ENCODE measurements at regions of chr10 and their contacts with region 1.

Region 1: DNA sequence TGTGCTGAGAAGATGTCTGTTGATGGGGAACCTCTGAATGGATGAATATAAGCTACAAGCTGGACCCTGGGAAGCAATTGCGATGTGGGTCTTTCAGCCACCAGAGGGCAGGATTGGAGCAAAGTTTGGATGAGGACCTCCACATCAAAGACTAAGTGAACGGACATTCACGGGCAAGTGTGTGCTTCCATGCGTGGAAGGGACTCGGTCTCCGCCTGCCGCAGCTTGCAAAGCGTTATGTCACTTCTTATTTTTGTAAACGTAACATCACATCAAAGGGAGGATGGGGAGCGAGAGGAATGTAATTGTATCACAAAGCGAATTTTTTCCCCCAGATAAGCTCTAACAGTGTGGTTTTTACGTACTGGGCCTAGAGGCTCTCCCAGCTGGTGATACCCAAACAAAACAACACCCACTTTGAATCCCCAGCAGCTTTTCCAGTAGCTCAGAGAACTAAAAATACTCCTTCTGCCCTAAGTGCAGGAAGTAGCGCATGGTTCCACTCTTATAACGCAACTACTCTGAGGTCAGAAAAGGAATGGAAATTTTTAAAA is 65.0 kb downstream of the VWA2 start:
- DNase-seq: peak; percentile 85
- ATAC-seq: peak; percentile 82
- H3K4me3 ChIP-seq: peak overlapping the region; percentile 24 to 41
- H3K27ac ChIP-seq: peak overlapping the region; percentile 13; the same call in 1 of the 2 replicates
- H3K4me1 ChIP-seq: peaks cover 6 to 19% of the 10 kb centered on the region in 2 experiments
- H3K27me3 ChIP-seq: peaks cover 26% of the 10 kb centered on the region; the same call in 1 of the 2 replicates
- CTCF ChIP-seq: peak; percentile 91 to 97 (median 97)
- POLR2A ChIP-seq: no peak
- RAD21 ChIP-seq: peak; percentile 100

Region 2: DNA sequence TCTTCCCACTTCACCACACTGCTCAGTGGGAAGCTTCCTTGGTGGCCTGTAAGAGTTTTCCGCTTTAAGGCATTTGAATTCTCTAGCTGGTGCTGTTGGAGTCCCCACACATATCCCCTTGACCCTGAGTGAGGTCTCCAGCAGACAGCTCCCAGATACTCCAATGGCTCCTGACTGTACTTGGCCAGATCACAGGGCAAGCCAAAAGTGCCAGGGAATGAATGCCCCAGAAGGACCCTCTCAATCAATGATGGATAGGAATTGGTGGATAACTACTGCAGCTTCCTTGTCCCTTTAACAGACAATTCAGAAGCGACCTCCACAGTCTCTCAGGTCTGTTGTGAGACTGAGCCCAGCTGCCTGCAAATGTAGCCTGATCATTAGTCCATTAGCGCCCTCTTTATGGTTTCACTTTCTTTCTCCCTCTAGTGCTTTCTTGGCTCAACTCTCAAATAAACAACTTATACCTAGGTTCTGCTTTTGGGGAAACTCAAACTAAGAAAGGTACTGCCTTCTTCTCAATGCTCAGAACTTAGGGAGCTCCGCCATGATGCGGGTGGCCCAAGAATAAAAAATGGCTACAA is 1071.1 kb before region 1 on chr10:
- CTCF ChIA-PET with region 1: no interaction called
- POLR2A ChIA-PET with region 1: no interaction called
- RAD21 ChIA-PET with region 1: no interaction called
- intact Hi-C with region 1: no loop called
- DNase-seq: no peak
- ATAC-seq: no peak
- H3K4me3 ChIP-seq: no peak overlapping the region
- H3K27ac ChIP-seq: no peak overlapping the region
- H3K4me1 ChIP-seq: no peaks in the 10 kb centered on the region
- H3K27me3 ChIP-seq: no peaks in the 10 kb centered on the region
- CTCF ChIP-seq: no peak
- POLR2A ChIP-seq: no peak
- RAD21 ChIP-seq: peak; percentile 37

Region 3: GRCh38 chr10:114208351-114208750 is 95.7 kb before region 1 on chr10:
- CTCF ChIA-PET with region 1: no interaction called
- POLR2A ChIA-PET with region 1: no interaction called
- RAD21 ChIA-PET with region 1: no interaction called
- intact Hi-C with region 1: no loop called
- DNase-seq: no peak
- ATAC-seq: peak; percentile 34; the same call in 1 of the 2 replicates
- H3K4me3 ChIP-seq: no peak overlapping the region
- H3K27ac ChIP-seq: no peak overlapping the region
- H3K4me1 ChIP-seq: no peaks in the 10 kb centered on the region
- H3K27me3 ChIP-seq: peaks cover 21% of the 10 kb centered on the region
- CTCF ChIP-seq: no peak
- POLR2A ChIP-seq: no peak
- RAD21 ChIP-seq: no peak

Region 4: GRCh38 chr10:114388275-114388674 is 84.2 kb after region 1 on chr10:
- CTCF ChIA-PET with region 1: interaction called, 19 read pairs
- POLR2A ChIA-PET with region 1: no interaction called
- RAD21 ChIA-PET with region 1: interaction called in 1 of 2 experiments, 4 read pairs
- intact Hi-C with region 1: no loop called
- DNase-seq: no peak
- ATAC-seq: no peak
- H3K4me3 ChIP-seq: no peak overlapping the region
- H3K27ac ChIP-seq: no peak overlapping the region
- H3K4me1 ChIP-seq: peaks cover 9 to 19% of the 10 kb centered on the region in 2 experiments
- H3K27me3 ChIP-seq: peaks cover 12% of the 10 kb centered on the region; the same call in 1 of the 2 replicates
- CTCF ChIP-seq: no peak
- POLR2A ChIP-seq: no peak
- RAD21 ChIP-seq: no peak

Region 5: GRCh38 chr10:114453576-114453975 is 149.5 kb after region 1 on chr10:
- CTCF ChIA-PET with region 1: interaction called, 95 read pairs
- POLR2A ChIA-PET with region 1: no interaction called
- RAD21 ChIA-PET with region 1: interaction called, 13 to 24 read pairs
- intact Hi-C with region 1: no loop called
- DNase-seq: no peak
- ATAC-seq: no peak
- H3K4me3 ChIP-seq: no peak overlapping the region
- H3K27ac ChIP-seq: no peak overlapping the region
- H3K4me1 ChIP-seq: no peaks in the 10 kb centered on the region
- H3K27me3 ChIP-seq: no peaks in the 10 kb centered on the region
- CTCF ChIP-seq: no peak
- POLR2A ChIP-seq: no peak
- RAD21 ChIP-seq: no peak

Region 6: GRCh38 chr10:114486938-114487814 is 183.1 kb after region 1 on chr10:
- CTCF ChIA-PET with region 1: interaction called, 14 read pairs
- POLR2A ChIA-PET with region 1: no interaction called
- RAD21 ChIA-PET with region 1: interaction called in 1 of 2 experiments, 5 read pairs
- intact Hi-C with region 1: no loop called
- DNase-seq: no peak
- ATAC-seq: peak; percentile 18; the same call in 1 of the 2 replicates
- H3K4me3 ChIP-seq: no peak overlapping the region
- H3K27ac ChIP-seq: peak overlapping the region; percentile 70
- H3K4me1 ChIP-seq: peaks cover 49 to 58% of the 10 kb centered on the region in 2 experiments
- H3K27me3 ChIP-seq: no peaks in the 10 kb centered on the region
- CTCF ChIP-seq: peak; percentile 30 to 74 (median 43); a peak in 4 of 6 replicates
- POLR2A ChIP-seq: no peak
- RAD21 ChIP-seq: peak; percentile 36; the same call in 1 of the 2 replicates

Region 7: DNA sequence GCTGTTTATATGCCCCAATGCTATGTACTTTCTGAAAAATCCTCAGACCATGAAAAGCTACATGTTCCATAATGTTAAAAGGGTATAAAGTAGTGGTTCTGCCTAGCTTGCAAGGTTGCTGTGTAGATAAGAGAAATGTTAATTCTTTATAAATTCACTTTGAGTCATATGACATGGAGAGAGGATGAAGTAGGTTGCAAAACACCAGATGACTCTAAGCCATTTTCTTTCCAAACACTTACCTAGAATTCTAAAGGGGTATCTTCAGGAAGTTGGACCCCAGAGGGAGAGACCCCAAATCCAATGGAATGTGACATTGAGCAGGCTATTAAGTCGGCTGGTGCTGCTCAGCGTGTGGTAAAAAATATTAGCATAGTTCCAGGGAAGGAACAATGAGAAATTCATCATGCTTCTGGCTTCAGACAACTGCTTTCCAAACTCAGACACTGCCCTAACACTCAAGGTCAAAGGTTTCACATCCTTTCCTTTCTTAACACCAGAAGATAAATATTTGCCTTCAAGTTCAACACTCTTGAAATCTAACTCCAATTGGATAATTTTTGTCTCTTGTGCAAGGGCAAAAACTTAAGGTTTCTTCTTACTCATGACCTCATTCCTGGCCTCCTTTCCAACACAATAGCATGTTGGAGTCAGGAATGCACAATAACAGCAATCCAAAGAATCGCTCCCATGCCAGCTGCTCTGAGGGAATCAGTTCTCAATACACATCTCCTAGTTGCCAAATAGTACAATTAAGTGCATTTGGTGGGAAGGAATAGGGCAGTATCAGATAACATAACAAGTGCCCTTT is 200.9 kb after region 1 on chr10:
- CTCF ChIA-PET with region 1: no interaction called
- POLR2A ChIA-PET with region 1: no interaction called
- RAD21 ChIA-PET with region 1: no interaction called
- intact Hi-C with region 1: no loop called
- DNase-seq: no peak
- ATAC-seq: no peak
- H3K4me3 ChIP-seq: no peak overlapping the region
- H3K27ac ChIP-seq: no peak overlapping the region
- H3K4me1 ChIP-seq: peaks cover 13 to 20% of the 10 kb centered on the region in 2 experiments
- H3K27me3 ChIP-seq: no peaks in the 10 kb centered on the region
- CTCF ChIP-seq: no peak
- POLR2A ChIP-seq: no peak
- RAD21 ChIP-seq: no peak

Region 8: GRCh38 chr10:114678336-114678735 is 374.2 kb after region 1 on chr10:
- CTCF ChIA-PET with region 1: no interaction called
- POLR2A ChIA-PET with region 1: no interaction called
- RAD21 ChIA-PET with region 1: no interaction called
- intact Hi-C with region 1: no loop called
- DNase-seq: no peak
- ATAC-seq: no peak
- H3K4me3 ChIP-seq: no peak overlapping the region
- H3K27ac ChIP-seq: no peak overlapping the region
- H3K4me1 ChIP-seq: peaks cover 6 to 20% of the 10 kb centered on the region in 2 experiments
- H3K27me3 ChIP-seq: no peaks in the 10 kb centered on the region
- CTCF ChIP-seq: no peak
- POLR2A ChIP-seq: no peak
- RAD21 ChIP-seq: no peak

Region 9: GRCh38 chr10:114703377-114704107 is 399.4 kb after region 1 on chr10:
- CTCF ChIA-PET with region 1: no interaction called
- POLR2A ChIA-PET with region 1: no interaction called
- RAD21 ChIA-PET with region 1: interaction called in 1 of 2 experiments, 3 read pairs
- intact Hi-C with region 1: loop called (anchors 5 kb)
- DNase-seq: no peak
- ATAC-seq: peak; percentile 90
- H3K4me3 ChIP-seq: no peak overlapping the region
- H3K27ac ChIP-seq: no peak overlapping the region
- H3K4me1 ChIP-seq: peaks cover 0 to 4% of the 10 kb centered on the region in 2 experiments; a peak in 2 of 4 replicates
- H3K27me3 ChIP-seq: no peaks in the 10 kb centered on the region
- CTCF ChIP-seq: peak; percentile 84 to 95 (median 88)
- POLR2A ChIP-seq: no peak
- RAD21 ChIP-seq: peak; percentile 90